ENCODE measurements at regions of chr6 and their contacts with region 1.

Region 1: DNA sequence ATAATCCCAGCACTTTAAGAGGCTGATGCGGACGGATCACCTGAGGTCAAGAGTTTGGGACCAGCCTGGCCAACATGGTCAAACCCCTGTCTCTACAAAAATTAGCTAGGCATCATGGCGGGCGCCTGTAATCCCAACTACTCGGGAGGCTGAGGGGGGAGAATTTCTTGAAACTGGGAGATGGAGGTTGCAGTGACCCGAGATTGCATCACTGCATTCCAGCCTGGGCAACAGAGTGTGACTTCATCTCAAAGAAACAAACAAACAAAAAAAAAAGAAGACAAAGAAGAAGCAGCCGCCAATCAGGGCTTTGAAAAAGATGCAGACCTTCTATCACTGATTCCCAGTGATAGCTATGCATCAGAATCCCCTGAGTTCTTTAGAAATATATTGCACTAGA is 56.8 kb downstream of the COL9A1 start:
- DNase-seq: no peak
- H3K4me3 ChIP-seq: no peak overlapping the region
- H3K27ac ChIP-seq: no peak overlapping the region
- H3K4me1 ChIP-seq: no peaks in the 10 kb centered on the region
- H3K27me3 ChIP-seq: no peaks in the 10 kb centered on the region
- CTCF ChIP-seq: no peak
- POLR2A ChIP-seq: no peak

Region 2: GRCh38 chr6:70531133-70531532 is 285.0 kb after region 1 on chr6:
- intact Hi-C with region 1: loop called (anchors 5 kb)
- DNase-seq: no peak
- H3K4me3 ChIP-seq: no peak overlapping the region
- H3K27ac ChIP-seq: no peak overlapping the region
- H3K4me1 ChIP-seq: no peaks in the 10 kb centered on the region
- H3K27me3 ChIP-seq: no peaks in the 10 kb centered on the region
- CTCF ChIP-seq: no peak
- POLR2A ChIP-seq: no peak

Measured in breast epithelium (tissue), 4 donors.